ENCODE measurements at regions of chr6 and their contacts with region 1.

Region 1: GRCh38 chr6:7238900-7239589 is 74.0 kb downstream of the SSR1 start:
- DNase-seq: peak; percentile 84 to 90
- H3K4me3 ChIP-seq: no peak overlapping the region
- H3K27ac ChIP-seq: no peak overlapping the region
- H3K4me1 ChIP-seq: peaks cover 0 to 34% (median 0%) of the 10 kb centered on the region in 4 donors
- H3K27me3 ChIP-seq: no peaks in the 10 kb centered on the region
- CTCF ChIP-seq: peak; percentile 55 to 61

Region 2: DNA sequence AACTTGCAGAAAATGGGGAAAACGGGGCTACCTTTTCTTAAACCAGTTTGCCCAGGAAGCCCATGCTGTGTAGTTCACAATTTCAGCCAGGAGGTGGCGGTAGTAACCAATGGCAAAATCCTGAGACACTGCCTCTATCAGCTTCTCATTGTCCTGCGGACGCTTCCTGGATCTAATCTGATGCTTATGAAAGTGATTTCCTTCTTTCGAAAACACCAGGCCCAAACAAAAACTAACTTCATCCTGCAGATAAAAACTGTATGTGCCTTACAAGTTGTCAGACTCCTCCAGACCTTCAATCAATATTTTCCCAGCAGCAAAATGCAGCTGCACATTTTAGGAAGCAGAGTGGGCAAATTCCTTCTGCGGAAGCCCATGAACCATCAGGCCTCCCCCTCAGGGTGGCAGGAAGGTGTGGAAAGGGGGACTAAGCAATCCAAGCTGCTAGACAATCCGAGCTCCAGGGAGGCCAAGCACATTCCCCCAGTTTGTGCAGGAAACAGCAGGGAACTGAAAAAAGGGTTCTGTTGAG is 562.1 kb before region 1 on chr6:
- intact Hi-C with region 1: loop called (anchors 5 kb)
- DNase-seq: peak; percentile 82 to 83
- H3K4me3 ChIP-seq: no peak overlapping the region
- H3K27ac ChIP-seq: no peak overlapping the region
- H3K4me1 ChIP-seq: no peaks in the 10 kb centered on the region
- H3K27me3 ChIP-seq: peaks cover 0 to 2% of the 10 kb centered on the region in 2 donors
- CTCF ChIP-seq: peak; percentile 87 to 93

Region 3: DNA sequence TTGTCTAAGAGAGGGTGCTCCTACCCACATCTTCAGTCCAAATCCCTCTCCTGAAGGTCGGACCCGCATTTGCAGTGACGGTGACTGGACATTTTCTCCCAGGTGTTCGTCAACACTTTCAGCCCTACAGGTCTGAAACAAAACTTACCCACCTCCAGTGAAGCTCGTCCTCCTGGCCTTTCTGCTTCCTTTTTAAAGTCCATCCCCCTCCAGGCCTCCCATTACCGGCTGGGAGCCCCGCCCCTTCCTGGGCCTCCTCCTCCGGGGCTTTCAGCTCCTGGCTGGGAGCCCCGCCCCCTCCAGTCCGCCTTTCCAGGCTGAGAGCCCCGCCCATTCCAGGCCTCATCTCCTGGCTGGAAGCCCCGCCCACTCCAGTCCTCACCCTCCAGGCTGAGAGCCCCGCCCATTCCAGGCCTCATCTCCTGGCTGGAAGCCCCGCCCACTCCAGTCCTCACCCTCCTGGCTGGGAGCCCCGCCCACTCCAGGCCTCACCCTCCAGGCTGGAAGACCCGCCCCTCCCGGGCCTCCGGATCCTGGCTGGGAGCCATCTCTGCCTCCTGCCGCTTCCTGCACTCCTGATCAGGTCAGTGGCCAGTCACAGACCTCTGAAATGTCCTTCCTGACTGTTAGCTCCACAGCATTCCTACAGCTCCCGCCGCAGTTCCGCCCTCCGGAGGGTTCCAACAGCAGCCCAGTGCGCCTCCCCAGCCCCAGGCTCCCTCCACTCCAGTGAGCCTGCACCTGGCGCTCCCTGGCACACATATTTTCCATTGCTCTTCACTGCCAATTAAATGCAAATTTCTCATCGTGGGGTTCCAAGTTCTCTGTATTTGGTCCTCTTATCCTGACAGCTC is 552.1 kb before region 1 on chr6:
- intact Hi-C with region 1: loop called (anchors 5 kb)
- DNase-seq: peak; percentile 41 to 83
- H3K4me3 ChIP-seq: no peak overlapping the region
- H3K27ac ChIP-seq: no peak overlapping the region
- H3K4me1 ChIP-seq: peaks cover 0 to 5% (median 2%) of the 10 kb centered on the region in 4 donors
- H3K27me3 ChIP-seq: peaks cover 0 to 16% of the 10 kb centered on the region in 2 donors
- CTCF ChIP-seq: no peak

Region 4: DNA sequence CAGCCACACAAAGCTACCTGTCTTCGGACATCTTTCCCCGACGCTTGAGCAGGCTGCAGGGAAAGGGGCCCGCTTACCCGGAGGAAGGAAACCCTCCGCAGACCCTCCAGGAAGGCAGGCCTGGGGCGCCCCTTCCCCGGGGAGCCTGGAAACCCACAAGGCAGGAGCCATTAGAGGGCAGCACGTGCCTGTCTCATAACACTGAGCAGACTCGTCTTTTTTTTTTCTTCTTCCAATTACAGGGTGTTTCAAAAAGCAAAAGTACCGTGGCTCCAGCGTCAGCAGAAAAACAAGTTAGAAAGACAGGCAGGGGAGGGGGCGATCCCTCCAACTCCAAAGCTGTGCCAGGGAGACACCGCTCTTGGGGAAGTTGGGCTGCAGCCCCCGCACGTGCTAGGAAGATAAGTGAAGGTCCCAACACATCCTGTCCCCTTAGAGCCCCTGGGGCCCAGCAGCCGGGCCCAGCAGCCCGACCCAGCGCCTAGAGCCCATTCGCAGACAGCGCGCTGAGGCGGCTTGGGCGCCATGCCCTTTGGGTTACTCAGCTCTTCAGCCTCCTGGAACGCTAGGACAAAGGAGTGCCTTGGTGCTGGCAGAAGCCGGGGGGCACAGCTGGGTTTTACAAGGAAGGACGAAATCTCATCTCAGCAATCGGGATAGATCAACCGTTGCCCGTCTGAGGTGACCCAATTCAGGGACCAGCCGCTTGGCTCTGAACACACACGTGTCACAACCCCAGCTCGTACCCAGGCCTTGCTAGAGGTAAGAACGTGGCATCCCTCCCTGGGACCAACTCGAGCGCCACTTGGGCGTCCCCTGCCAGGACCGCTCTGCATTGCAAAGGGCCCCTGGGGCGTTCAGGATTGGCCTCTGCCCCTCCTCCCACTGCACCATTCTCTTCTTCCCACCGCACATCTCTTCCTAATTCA is 514.2 kb before region 1 on chr6:
- intact Hi-C with region 1: loop called (anchors 5 kb)
- DNase-seq: peak; percentile 72 to 77
- H3K4me3 ChIP-seq: peak overlapping the region; percentile 41 to 52
- H3K27ac ChIP-seq: peak overlapping the region; percentile 56 to 60
- H3K4me1 ChIP-seq: peaks cover 0 to 20% (median 15%) of the 10 kb centered on the region in 4 donors
- H3K27me3 ChIP-seq: no peaks in the 10 kb centered on the region
- CTCF ChIP-seq: peak; percentile 37 to 60

Region 5: GRCh38 chr6:7112741-7113313 is 126.2 kb before region 1 on chr6:
- intact Hi-C with region 1: loop called (anchors 10 kb)
- DNase-seq: no peak
- H3K4me3 ChIP-seq: no peak overlapping the region
- H3K27ac ChIP-seq: no peak overlapping the region
- H3K4me1 ChIP-seq: peaks cover 0 to 55% (median 38%) of the 10 kb centered on the region in 4 donors
- H3K27me3 ChIP-seq: no peaks in the 10 kb centered on the region
- CTCF ChIP-seq: no peak